RWPE1 (cell line): ENCODE measurements at regions of chr20 and their contacts with region 1.

Region 1: GRCh38 chr20:63520504-63520933 is at the start of gene PPDPF:
- DNase-seq: peak; percentile 100
- H3K27ac ChIP-seq: peak within 1 kb of the TSS; percentile 92
- CTCF ChIP-seq: no peak

Region 2: DNA sequence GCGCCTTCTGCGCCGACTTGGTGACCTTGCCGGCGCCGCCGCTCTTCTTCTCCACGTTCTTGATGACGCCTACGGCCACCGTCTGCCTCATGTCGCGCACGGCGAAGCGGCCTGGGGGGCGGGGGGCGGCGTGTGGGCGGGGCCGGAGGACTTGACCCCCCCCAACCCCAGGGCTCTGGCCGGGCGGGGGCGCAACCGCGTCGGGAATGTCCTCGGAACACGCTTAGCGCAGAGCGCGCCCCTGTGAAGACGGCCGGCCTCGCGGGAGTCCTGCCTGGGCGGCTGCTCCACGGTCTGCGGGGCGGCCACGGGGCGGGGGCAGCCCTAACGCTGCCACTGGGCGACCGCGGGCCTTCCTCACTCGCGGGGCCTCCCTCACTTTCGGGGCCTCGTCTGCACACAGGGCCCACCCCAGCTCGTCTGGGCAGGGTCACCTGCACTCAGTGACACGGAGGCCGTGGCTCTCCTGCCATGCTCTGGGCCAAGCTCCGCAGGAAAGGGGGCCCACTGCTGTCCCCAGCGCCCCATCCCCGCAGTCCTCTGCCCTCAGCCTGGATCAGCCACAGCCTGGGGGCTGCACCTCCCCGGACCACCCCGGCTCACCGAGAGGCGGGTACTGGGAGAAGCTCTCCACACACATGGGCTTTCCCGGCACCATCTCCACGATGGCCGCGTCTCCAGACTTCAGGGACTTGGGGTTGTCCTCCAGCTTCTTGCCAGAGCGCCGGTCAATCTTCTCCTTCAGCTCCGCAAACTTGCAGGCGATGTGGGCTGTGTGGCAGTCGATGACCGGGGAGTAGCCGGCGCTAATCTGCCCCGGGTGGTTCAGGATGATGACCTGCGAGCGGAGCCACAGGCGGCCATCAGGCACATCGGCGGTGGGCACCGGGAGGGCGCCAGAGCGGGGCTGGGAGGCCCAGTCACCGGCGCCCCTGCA is 31.9 kb before region 1 on chr20:
- CTCF ChIA-PET with region 1: interaction called, 4 read pairs
- POLR2A ChIA-PET with region 1: interaction called, 10 read pairs
- DNase-seq: no peak
- H3K27ac ChIP-seq: no peak overlapping the region
- CTCF ChIP-seq: no peak